GM10248 (cell line): ENCODE measurements at regions of chr17 and their contacts with region 1.

Region 1: DNA sequence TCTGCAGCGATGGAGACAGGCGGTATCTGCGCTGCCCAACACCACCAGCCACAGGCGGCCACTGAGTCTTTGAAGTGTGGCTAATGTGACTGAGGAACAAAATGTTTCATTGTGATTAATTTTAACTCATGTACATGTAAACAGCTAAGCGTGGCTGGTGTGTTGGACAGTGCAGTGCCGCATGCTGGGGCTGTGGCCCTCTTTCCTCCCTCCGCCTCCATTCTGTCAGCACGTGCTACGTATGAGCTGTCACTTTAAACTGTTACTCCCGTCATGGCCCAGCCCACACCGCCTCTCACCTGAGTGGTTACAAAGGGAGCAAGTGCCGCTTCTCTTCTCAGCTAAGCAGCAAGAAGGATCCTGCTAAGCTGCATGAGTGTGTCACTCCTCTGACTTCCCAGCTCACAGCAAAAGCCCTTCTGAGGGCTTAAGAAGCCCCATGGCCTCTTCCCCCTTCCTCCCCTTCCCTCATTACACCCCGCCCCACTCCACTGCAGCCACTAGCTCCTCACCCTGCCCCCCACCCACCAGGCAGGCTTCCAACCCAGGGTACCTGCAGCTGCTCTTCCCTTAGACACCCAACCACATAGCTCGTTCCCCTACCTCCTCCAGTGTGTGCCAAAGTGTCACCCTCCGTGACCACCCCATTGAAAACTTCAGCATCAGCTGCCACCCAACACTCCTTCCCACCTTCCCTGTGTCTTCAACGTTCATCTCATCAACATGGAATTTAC is 15.0 kb downstream of the HASPIN start:
- DNase-seq: no peak
- CTCF ChIP-seq: no peak

Region 2: DNA sequence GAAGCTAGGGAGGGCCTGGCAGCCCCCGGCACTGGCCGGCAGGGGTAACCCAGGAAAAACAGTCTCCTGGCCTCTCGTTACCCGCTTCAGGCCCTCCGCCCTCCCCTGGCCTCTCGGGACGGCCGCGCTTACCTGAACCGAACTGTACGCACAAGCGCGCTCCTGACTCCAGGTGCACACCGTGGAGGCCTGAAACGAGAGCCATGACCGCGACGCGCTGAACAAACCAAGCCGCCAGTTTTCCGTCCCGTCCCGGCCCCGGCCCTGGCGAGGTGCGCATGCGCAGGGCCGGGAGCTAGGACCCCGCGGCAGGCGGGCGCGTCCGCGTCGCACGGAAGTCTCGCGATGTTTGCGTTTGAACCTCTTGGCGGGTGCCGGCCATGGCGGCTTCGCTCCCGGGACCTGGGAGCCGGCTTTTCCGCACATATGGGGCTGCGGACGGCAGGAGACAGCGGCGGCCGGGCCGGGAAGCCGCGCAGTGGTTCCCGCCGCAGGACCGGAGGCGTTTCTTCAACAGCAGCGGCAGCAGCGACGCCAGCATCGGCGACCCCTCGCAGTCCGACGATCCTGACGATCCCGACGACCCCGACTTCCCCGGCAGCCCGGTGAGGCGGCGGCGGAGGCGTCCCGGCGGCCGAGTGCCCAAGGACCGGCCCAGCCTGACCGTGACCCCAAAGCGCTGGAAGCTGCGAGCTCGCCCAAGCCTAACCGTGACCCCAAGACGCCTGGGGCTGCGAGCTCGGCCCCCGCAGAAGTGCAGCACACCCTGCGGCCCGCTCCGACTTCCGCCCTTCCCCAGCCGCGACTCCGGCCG is 15.0 kb before region 1 on chr17 and contains the start of gene HASPIN:
- CTCF ChIA-PET with region 1: interaction called, 69 read pairs
- POLR2A ChIA-PET with region 1: interaction called, 4 read pairs
- DNase-seq: peak; percentile 99
- CTCF ChIP-seq: no peak

Region 3: DNA sequence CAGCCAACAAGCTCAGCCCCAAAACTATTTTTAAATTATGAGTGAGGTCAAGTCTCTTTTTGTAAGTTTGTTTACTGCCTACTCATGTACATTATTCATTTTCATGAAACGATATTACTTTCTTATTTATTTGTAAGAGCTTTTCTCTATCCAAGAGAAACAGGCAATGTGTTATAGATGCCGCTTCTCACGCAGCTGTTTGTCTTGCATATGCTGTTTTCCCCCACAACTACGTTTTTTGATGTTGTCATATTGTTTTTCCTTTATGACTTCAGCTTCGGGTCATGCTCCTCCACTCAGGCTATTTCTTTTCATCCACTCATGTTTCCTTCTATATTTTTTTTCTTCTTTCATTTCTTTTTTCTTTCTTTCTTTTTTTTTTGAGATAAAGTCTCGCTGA is 42.3 kb after region 1 on chr17:
- CTCF ChIA-PET with region 1: interaction called, 10 read pairs
- POLR2A ChIA-PET with region 1: no interaction called
- DNase-seq: no peak
- CTCF ChIP-seq: no peak

Region 4: GRCh38 chr17:3818786-3819185 is 80.1 kb after region 1 on chr17:
- CTCF ChIA-PET with region 1: interaction called, 18 read pairs
- POLR2A ChIA-PET with region 1: no interaction called
- DNase-seq: no peak
- CTCF ChIP-seq: no peak

Region 5: GRCh38 chr17:3845621-3846441 is 107.1 kb after region 1 on chr17 and contains the start of gene NCBP3:
- CTCF ChIA-PET with region 1: interaction called, 107 read pairs
- POLR2A ChIA-PET with region 1: interaction called, 3 read pairs
- DNase-seq: peak; percentile 98
- CTCF ChIP-seq: peak; percentile 94